ENCODE measurements at regions of chr19 and their contacts with region 1.

Region 1: DNA sequence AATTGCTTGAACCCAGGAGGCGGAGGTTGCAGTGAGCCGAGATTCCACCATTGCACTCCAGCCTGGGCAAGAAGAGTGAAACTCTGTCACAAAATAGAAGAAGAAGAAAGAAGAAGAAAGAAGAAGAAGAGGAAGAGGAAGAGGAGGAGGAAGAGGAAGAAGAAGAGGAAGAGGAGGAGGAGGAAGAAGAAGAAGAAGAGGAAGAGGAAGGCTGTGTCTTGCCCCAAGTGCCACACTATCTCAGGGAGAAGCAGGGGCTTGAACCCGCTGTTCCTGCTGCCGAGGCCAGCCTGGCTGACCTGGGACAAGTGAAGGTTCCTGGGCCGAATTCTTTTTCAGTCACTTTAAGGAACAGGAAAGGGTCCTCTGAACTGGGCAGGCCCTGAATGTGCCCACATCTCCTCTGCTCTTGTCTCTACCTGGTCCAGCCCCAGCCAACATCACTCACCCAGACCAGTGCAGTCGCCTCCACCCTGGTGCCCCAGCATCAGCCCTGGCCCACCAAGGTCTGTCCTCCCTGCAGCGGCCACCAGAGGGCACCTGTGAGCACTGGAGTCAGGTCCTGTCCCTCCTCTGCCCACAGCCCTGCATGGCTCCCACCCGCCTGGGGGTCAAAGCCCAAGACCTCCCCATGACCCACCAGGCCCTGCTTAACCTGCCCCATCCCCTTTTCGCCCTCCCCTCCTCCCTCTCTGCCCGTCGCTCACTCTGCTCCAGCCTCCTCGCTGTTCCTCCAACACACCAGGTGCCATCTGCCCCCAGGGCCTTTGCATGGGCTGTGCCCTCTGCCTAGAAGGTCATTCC is 20.0 kb downstream of the TICAM1 start:
- DNase-seq: peak; percentile 91
- ATAC-seq: peak; percentile 45

Region 2: DNA sequence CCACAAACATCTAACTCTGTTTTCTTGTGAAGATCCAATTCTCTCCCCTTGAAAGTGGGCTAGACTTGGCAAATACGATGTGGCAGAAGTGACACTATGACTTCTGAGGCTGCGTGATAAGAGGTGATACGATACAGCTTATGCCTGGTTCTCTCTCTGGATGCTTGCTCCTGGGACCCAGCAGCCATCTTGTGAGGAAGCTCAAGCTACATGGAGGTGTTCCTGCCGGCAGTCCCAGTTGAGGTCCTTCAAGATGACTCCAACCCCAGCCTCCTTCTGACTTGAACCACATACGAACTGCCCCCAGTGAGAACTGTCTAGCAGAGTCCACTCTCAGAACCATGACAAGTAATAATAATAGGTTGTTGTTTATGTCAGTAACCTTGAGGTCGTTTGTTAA is 30.7 kb before region 1 on chr19:
- intact Hi-C with region 1: no loop called
- DNase-seq: no peak
- ATAC-seq: no peak

Region 3: DNA sequence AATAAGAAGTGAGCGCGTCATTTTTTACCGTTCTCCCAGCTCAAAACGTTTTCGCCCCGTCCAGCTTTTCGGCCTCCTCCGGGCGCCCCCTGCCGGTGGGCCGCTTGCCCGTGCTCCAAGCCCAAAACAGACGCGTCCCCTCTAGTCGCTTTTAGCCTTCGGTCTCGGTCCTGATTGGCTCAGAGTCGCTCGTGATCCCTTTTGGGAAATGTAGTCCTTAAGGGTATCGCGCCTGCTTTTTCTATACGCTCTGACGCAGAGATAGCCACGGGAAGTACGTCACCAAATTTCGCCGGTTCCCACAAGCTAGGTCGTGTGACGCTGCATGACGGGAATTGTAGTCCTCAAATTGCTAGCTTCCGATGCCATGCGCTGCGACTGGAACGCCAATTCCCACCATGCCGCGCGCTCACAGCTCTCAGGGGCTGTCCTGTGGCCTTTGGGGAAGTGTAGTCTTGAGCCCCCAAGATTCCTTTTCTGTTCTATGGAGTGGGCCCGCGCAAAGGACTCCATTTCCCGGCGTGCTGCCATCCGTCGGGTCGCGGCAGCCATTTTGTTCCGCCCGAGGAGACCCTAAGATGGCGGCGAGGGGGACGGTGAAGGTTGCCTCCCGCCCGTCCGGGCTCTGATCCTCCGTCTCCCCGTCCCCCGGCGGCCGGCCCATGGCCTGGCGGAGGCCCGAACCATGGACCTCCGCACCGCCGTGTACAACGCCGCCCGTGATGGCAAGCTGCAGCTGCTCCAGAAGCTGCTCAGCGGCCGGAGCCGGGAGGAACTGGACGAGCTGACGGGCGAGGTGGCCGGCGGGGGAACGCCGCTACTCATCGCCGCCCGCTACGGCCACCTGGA is 20.1 kb before region 1 on chr19 and contains the start of gene FEM1A:
- intact Hi-C with region 1: no loop called
- DNase-seq: peak; percentile 99
- ATAC-seq: peak; percentile 99
- total RNA-seq, gene FEM1A: 47.0 TPM

Region 4: DNA sequence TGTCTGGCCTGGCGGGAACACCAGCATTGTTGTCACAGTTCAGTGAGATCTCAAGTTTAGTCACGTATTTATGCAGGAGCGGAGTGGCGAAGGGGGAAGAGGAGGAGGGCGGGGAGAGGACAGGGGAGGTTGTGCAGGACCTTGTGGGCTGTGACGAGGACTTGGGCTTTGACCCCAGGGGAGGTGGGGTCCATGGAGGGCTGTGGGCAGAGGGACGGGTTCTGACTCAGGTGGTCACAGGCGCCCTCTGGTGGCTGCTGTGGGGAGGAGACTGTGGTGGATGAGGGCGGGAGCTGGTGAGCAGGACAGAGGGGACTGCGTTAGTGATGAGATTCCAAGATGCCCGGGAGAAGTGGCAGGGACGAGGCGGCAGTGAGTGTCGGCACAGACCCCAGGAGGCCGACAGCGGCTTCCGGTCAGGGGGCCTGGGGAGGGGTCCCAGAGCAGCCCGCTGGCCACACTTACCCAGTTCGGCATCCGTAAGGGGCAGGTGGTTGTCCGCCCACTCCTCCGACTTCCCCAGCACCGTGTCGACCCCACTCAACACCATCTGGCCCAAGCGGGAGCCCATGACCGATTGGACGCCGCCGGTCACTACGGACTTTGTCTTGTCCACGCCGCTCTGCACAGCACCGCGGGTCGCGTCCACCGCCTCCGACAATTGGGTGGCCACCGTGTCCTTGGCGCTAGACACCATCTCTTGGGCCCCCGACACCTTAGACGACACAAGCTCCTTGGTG is 40.2 kb after region 1 on chr19:
- intact Hi-C with region 1: loop called (anchors 1 kb)
- DNase-seq: peak; percentile 87
- ATAC-seq: peak; percentile 79

Region 5: DNA sequence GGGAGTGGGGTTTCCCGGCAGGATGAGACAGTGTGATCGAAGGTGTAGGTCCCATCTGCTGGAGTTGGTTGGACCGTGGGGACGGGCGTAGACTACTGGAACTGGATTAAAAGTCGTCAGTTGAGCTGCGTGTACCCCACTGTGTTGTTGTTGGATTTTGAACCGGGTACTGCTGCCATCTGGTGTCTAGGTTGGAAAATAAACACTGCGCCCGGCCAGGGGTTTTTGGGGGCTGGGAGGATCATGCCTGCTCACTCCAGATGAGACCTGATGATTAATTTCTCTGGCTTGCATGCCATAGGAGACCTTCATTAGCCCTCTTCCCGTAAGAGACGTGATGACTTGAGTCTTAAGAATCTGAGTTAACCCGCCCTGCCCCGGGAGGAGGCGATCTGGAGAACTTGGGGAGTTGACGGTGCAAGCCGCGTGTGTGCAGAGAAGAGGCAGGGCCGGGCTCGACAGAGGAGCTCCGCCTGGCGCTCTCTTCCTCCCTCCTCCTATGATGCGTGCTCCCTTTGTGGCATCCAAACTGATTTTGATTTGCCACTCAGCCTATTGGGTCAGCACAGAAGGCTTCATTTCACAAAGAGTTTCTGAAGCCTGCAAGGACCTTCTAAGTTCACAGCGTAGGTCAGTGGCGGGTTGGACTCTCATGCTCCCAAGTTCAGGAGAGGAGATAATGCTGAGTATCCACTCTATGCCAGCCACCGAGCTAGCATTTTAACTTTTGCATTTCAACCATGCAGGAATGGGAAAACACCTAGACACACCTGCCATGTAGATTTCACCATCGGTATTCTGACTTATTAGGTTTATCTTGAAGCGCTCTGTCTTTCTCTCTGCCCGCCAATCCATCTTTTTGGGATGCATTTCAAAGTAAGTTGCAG is 100.5 kb after region 1 on chr19:
- intact Hi-C with region 1: loop called (anchors 1 kb)
- DNase-seq: no peak
- ATAC-seq: peak; percentile 39